ENCODE measurements at regions of chr6 and their contacts with region 1.

Region 1: DNA sequence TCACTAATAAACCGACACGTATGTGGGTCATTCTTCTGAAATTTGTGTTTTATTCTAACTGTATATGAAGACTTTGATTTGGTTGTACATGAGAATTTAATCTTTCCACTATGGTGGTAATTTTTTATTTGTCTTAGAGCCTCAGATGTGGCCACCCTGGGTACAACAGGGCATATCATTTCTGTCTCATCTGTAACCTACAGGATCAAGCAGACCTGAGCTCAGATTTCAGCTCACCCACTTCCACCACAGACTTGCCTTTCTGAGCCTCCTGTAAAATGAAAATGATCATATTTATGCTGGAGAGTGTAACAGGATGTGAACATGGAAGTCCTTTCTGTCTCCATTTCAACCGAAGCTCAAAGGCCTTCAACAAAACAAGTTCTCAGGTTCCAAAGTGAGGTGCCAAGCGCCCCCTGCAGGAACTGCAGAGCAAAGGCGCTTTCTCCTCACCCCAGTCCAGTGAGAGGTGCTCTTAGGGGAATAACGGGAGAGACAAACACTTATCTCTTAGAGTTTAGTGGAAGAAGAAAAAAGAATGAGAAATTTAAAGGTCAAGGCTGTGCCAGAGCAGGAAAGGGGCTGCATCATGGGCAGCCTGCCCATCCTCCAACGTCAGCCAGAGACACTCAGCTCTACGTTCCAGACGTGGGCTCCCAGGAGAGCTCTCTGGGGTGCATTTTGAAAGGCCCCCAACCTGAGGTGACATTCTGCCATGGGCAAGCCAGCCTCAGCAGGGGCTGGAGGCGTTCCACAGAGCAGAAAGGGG is 23.0 kb upstream of the CD24 start:
- DNase-seq: peak; percentile 67
- H3K4me3 Mint-ChIP-seq: no peak overlapping the region
- H3K27ac Mint-ChIP-seq: no peak overlapping the region
- H3K4me1 Mint-ChIP-seq: no peaks in the 10 kb centered on the region
- H3K27me3 Mint-ChIP-seq: no peaks in the 10 kb centered on the region
- CTCF ChIP-seq: peak; percentile 67

Region 2: DNA sequence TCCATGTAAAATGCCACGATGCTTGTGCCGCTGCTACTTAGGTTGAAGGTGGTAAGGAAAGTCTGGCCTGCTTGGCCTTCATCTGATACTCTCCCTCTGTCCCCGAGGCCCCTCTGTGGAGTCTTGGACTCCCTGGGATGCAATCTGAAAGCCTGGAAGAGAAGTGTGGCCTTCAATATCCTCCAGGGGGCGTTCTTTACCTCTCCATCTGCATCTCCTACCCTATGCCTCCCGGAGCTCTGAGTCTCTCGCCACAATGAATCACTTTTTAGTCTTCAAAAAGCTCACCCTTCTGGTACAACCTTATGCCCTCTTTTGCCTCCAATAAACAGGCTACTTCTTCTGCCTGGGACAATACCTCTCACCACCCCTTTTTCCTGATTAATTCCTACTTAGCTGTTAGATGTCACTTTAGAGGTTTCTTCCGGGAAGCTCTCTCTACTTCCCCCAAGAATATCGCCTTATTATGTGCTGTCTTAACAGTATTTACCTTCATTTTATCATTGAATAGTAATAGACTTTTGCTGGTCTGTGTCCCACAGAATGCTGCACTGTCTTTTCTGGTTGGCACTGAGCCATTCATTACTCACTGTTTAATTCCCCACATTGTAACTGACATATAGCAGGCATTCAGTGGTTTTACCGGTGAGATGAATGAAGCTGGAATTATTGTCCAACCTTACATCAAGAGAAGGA is 658.1 kb before region 1 on chr6:
- CTCF ChIA-PET with region 1: interaction called, 4 read pairs
- POLR2A ChIA-PET with region 1: no interaction called
- intact Hi-C with region 1: loop called (anchors 1 kb)
- DNase-seq: peak; percentile 87
- H3K4me3 Mint-ChIP-seq: peak overlapping the region; percentile 61
- H3K27ac Mint-ChIP-seq: peak overlapping the region; percentile 43
- H3K4me1 Mint-ChIP-seq: peaks cover 11% of the 10 kb centered on the region
- H3K27me3 Mint-ChIP-seq: no peaks in the 10 kb centered on the region
- CTCF ChIP-seq: peak; percentile 68

Region 3: DNA sequence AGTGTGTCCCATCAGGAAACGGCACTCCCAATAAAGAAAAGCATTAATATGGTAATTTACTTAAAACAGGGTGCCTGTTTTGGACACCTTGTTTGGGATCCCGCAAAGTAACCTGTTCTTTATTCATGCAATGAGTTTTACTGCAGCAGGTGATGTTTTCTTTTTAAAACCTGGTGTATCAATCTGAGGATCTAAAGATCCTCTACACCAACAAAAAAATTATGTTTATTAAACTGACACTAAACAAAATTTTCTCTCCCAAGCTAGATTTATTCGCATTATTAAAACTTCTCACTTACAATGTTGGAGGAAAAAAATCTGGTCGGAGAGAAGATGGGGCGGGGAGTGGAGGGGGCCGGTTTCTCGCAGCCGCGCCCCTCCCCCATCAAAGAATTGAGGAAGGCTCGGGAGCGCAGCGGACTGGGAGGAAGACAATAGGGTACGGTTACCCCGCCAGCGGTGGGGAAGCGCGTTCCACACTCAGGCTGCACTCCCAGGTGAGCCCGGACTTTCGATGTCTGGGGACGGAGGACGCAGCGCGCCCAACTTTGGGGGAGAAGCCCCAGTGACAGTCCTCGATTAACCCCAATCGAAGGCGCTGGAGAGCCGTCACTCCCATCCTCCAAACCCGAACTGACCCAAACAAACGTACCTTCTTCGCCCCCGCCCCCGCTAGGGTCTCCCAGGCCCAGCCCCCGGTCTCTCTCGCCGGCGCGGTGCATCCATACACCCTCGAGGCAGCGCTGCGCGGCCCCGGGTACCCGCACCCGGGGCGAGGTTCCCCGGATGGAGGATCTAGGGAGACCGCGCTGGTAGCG is 24.3 kb before region 1 on chr6:
- CTCF ChIA-PET with region 1: no interaction called
- POLR2A ChIA-PET with region 1: no interaction called
- intact Hi-C with region 1: no loop called
- DNase-seq: peak; percentile 7
- H3K4me3 Mint-ChIP-seq: peak overlapping the region; percentile 78
- H3K27ac Mint-ChIP-seq: no peak overlapping the region
- H3K4me1 Mint-ChIP-seq: no peaks in the 10 kb centered on the region
- H3K27me3 Mint-ChIP-seq: no peaks in the 10 kb centered on the region
- CTCF ChIP-seq: no peak

Region 4: DNA sequence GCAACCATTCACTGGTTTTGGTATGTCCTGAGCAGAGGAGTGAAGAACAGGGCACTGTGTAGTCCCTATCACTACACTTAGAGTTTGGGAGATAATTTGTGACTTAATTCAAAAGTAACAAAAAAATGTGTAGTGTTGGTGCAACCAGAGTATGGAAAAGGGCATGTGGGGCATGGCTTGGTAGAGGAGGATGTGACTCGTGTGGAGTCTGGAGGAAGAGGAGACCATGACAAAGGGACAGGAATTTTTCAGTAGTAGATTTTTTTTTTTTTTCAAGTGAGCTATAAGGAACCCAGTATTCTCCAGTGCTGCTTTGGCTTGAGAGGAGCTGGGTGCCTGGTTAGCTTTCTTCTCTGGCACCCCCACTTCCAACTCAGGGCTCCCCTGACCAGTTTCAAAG is 35.6 kb after region 1 on chr6:
- CTCF ChIA-PET with region 1: no interaction called
- POLR2A ChIA-PET with region 1: no interaction called
- intact Hi-C with region 1: no loop called
- DNase-seq: no peak
- H3K4me3 Mint-ChIP-seq: no peak overlapping the region
- H3K27ac Mint-ChIP-seq: no peak overlapping the region
- H3K4me1 Mint-ChIP-seq: peaks cover 15% of the 10 kb centered on the region
- H3K27me3 Mint-ChIP-seq: no peaks in the 10 kb centered on the region
- CTCF ChIP-seq: no peak

Measured in MCF 10A (cell line).